Left ventricle myocardium superior (tissue), 1 donor: ENCODE measurements at regions of chr4 and their contacts with region 1.

Region 1: DNA sequence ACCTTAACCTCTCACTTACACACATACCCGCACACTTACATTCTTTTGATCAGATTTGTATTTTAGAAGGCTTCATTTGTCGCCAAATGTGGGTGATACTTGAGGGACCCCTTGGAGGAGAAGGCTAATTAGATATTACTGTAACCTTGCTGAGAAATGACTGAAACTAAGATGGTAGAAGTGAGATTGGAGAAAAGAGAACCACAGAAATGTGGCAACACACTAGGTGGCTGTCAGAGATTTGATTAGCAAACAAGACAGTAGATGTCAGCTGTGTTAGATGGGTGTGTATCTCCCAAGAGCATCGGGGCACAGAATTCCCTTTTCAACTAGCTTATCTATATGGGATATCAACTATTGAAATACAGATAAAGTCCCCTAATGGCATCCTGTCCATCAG is 149.3 kb upstream of the FABP2 start:
- DNase-seq: no peak
- ATAC-seq: no peak

Region 2: DNA sequence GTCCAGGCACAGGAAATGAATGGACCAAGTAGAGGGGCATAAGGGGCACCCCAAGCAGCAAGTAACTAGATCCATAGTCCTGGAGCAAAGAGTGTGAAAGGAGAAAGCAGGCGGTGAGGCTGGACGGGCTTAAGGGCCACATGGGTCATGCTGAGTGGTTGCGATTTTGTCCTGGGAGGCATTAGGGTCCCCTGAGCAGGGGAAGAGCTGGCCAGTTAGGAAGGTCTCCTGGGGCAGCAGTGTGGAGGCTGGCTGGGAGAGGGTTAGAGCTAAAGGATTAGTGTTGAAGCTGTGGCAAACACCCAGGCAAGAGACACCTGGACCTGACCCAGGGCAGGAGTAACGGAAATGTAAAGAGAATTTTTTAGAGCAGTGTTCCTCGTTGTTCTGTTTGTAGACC is 309.1 kb before region 1 on chr4:
- intact Hi-C with region 1: no loop called
- DNase-seq: no peak
- ATAC-seq: peak; percentile 31

Region 3: GRCh38 chr4:119300101-119300978 is 170.9 kb before region 1 on chr4:
- intact Hi-C with region 1: loop called (anchors 10 kb)
- DNase-seq: peak; percentile 98
- ATAC-seq: peak; percentile 96

Region 4: DNA sequence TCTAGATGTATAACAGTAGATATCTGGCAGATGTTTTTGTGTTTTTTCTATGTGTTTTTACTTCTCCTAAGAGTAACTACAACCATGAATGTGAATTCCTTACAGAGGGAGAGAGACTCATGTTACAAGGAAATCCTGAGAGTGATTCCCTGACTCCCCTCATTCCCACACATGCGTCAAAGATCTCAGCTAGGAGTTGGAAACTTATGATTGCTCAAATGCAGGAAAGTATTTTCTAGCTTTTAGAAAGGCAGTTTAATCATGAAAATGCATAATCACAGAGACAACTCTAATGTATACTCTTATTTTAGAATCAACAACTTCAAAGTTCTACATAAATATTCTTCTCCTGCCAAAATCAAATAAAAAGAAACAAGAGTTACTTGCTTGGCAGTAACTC is 35.5 kb after region 1 on chr4:
- intact Hi-C with region 1: no loop called
- DNase-seq: no peak
- ATAC-seq: no peak